ENCODE measurements at regions of chr12 and their contacts with region 1.

Region 1: GRCh38 chr12:56041552-56042429 is at the start of gene RPS26:
- DNase-seq: peak; percentile 96
- total RNA-seq, gene RPS26: 39.5 TPM

Region 2: DNA sequence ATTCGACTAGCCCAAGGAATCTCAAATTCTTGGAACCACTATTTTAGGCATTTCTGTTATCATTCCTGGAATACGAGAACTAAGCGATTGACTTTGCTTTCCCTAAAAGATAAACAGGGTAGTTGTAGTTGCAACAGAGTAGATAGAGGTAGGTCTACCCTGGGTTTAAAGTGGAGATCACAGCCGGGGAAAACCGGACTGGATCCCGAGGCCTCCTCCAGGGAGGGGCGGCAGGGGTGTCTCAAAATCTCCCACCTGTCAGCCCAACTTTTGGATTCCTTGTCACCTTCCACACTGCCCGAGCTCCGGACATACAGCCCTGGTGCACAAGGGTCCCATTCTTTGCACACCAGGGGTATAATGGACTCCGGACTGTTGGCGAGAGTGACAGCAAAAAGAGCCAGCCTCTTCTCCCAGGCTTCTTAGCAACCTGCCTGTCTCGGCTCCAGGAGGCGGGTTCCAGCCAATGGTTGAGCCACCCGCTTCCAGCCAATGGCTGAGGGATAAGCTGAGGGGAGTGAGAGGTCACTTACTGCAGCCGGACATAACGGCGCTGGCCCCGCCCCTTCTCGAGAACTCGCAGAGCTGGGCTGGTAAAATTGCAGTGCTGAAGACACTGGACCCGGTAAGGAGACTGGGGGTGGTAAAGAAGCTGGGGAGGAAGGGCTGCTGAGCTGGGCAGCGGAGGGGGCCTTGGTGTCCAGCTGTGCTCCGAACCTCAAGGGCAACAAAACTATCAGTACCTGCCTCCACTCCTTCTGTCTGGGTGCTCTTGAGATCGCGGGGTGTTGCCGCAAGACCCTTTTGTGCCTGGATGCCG is 44.9 kb before region 1 on chr12 and contains the start of gene SUOX:
- intact Hi-C with region 1: loop called (anchors 1 kb)
- DNase-seq: peak; percentile 99
- total RNA-seq, gene SUOX: 25.0 TPM

Region 3: GRCh38 chr12:56104109-56104814 is 62.5 kb after region 1 on chr12 and contains the start of gene PA2G4:
- intact Hi-C with region 1: loop called (anchors 1 kb)
- DNase-seq: peak; percentile 99
- total RNA-seq, gene PA2G4: 61.6 TPM